Activated CD8-positive, alpha-beta T cell treated with anti-CD3 and anti-CD28 coated beads, Interleukin-2, amount 10 ng/mL, durations not matched to agents 7 days and 5 days (primary cell): ENCODE measurements at regions of chr2 and their contacts with region 1.

Region 1: DNA sequence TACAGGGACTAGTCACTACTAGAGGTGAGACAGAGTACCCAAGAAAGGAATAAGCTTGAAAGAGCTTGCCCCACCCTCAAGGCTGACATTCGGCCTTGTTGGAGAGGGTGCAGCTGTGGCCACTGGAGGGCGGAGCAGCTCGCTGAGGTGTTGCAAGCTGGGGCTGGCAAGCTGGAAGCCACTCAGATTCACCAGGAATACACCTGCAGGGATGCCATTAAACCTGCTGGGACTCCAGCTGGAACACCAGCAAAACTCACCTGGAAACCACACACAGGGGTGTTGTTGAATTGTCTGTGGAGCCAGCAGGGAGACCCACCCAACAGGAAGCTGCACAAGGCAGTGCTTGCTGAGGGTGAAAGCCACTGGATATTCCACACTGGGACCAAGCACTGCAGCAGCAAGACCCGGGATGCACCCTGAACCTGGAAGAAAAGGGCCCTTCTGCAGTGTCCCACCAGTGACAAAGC is 26.1 kb downstream of the KCTD18 start:
- DNase-seq: peak; percentile 53
- ATAC-seq: peak; percentile 54
- H3K4me3 Mint-ChIP-seq: no peak overlapping the region
- H3K27ac Mint-ChIP-seq: no peak overlapping the region
- H3K4me1 Mint-ChIP-seq: no peaks in the 10 kb centered on the region
- H3K27me3 Mint-ChIP-seq: no peaks in the 10 kb centered on the region

Region 2: GRCh38 chr2:199979832-199980628 is 503.7 kb before region 1 on chr2:
- CTCF ChIA-PET with region 1: interaction called, 49 read pairs
- POLR2A ChIA-PET with region 1: no interaction called
- DNase-seq: peak; percentile 86
- ATAC-seq: peak; percentile 65
- H3K4me3 Mint-ChIP-seq: no peak overlapping the region
- H3K27ac Mint-ChIP-seq: no peak overlapping the region
- H3K4me1 Mint-ChIP-seq: peaks cover 21% of the 10 kb centered on the region
- H3K27me3 Mint-ChIP-seq: no peaks in the 10 kb centered on the region

Region 3: GRCh38 chr2:200373973-200374416 is 109.8 kb before region 1 on chr2:
- CTCF ChIA-PET with region 1: interaction called, 14 read pairs
- POLR2A ChIA-PET with region 1: no interaction called
- DNase-seq: peak; percentile 73
- ATAC-seq: peak; percentile 94
- H3K4me3 Mint-ChIP-seq: peak overlapping the region; percentile 84
- H3K27ac Mint-ChIP-seq: peak overlapping the region; percentile 95
- H3K4me1 Mint-ChIP-seq: peaks cover 55% of the 10 kb centered on the region
- H3K27me3 Mint-ChIP-seq: no peaks in the 10 kb centered on the region

Region 4: GRCh38 chr2:200471324-200471848 is 12.4 kb before region 1 on chr2:
- CTCF ChIA-PET with region 1: interaction called, 58 read pairs
- POLR2A ChIA-PET with region 1: interaction called, 3 read pairs
- DNase-seq: peak; percentile 50
- ATAC-seq: no peak
- H3K4me3 Mint-ChIP-seq: no peak overlapping the region
- H3K27ac Mint-ChIP-seq: peak overlapping the region; percentile 47
- H3K4me1 Mint-ChIP-seq: peaks cover 35% of the 10 kb centered on the region
- H3K27me3 Mint-ChIP-seq: no peaks in the 10 kb centered on the region

Region 5: DNA sequence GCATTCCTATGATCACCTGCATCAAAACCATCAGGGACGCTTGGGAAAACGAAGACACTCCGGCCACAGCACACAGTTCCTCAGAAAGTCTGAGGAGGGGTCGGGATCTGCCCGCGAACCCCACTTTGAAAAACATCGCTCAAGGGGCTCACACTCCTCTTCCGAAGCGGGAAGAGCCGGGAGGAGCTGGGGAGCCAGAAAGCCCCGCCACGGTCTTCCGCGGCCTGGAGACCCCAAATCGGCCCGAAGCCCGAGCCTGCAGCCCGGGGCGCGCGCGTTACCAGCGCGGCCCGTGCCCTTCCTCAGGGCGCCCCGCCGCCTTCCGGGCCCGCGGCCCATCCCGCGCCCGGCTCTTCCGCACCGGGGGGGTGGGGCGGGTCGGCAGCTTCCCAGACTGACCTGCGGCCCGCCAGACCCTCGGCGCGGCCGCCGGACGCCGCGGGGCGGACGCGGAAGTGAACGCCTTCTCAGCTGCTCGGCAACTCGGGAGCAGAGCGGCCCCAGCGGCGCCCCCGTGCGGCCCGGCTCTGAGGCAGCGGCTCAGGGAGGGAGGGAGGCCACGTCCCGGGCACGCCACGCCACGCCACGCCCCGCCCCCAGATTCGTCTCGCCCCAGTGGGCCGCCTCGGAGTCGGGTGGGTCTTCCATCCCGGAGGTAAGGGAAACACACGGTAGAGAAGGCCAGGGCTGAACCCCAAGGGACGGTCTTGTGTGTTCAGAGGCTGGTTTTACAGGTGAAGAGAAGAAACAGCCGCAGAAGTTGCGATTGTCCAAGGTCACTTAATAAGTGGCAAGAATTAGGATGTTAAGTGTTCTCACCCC is 26.1 kb after region 1 on chr2 and contains the start of gene KCTD18:
- CTCF ChIA-PET with region 1: interaction called, 12 read pairs
- POLR2A ChIA-PET with region 1: no interaction called
- DNase-seq: peak; percentile 93
- ATAC-seq: peak; percentile 99
- H3K4me3 Mint-ChIP-seq: peak within 1 kb of the TSS; percentile 96
- H3K27ac Mint-ChIP-seq: peak within 1 kb of the TSS; percentile 93
- H3K4me1 Mint-ChIP-seq: peaks cover 20% of the 10 kb centered on the region
- H3K27me3 Mint-ChIP-seq: no peaks in the 10 kb centered on the region
- total RNA-seq, gene KCTD18: 14.3 to 14.8 TPM

Region 6: DNA sequence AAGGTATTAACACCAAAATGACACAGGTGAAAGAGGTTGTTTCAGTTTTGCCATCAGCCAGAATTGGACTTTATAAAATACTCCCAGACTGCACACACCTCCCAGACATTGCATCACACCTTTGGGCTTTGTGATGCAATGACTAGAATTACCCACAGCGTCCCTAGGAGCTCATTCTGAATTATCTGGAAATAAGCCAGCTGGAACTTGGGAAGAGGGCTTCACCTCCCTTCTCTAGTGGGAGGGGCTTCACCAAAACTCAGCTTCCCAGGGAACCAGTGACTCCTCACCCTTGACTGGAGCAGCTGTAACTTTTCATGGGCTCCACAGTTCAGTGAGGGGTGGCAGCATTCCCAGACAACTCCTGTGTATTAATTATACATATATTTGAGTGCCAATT is 244.9 kb after region 1 on chr2:
- CTCF ChIA-PET with region 1: no interaction called
- POLR2A ChIA-PET with region 1: no interaction called
- DNase-seq: no peak
- ATAC-seq: no peak
- H3K4me3 Mint-ChIP-seq: no peak overlapping the region
- H3K27ac Mint-ChIP-seq: no peak overlapping the region
- H3K4me1 Mint-ChIP-seq: peaks cover 10% of the 10 kb centered on the region
- H3K27me3 Mint-ChIP-seq: peaks cover 21% of the 10 kb centered on the region